Activated CD4-positive, alpha-beta memory T cell treated with anti-CD3 and anti-CD28 coated beads, Interleukin-2, amount 10 ng/mL, durations not matched to agents 7 days and 5 days (primary cell): ENCODE measurements at regions of chr5 and their contacts with region 1.

Region 1: DNA sequence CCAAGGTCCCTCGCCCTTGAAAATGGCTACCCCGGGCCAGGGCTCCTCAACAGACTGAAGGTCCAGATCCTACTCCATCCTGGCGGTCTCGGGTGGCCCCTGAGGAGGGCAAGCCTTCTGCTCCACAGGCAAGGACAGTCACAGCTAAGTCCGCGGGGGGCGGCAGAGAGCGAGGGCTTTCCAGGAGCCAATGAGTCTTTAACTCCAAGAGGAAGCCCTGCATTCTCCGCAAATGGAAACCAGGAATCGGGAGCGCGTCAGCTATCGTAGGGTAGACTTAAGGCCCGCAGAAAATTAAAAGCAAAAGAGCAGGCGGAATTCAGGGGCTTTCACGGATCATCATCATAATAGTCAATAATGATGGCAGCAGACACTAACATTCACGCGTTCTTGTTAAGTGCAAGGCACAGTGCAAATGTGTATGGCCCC is 87.8 kb upstream of the TNFAIP8 start:
- DNase-seq: peak; percentile 86
- H3K4me3 Mint-ChIP-seq: peak overlapping the region; percentile 96
- H3K27ac Mint-ChIP-seq: peak overlapping the region; percentile 89
- H3K4me1 Mint-ChIP-seq: peaks cover 50% of the 10 kb centered on the region
- H3K27me3 Mint-ChIP-seq: peaks cover 2% of the 10 kb centered on the region

Region 2: DNA sequence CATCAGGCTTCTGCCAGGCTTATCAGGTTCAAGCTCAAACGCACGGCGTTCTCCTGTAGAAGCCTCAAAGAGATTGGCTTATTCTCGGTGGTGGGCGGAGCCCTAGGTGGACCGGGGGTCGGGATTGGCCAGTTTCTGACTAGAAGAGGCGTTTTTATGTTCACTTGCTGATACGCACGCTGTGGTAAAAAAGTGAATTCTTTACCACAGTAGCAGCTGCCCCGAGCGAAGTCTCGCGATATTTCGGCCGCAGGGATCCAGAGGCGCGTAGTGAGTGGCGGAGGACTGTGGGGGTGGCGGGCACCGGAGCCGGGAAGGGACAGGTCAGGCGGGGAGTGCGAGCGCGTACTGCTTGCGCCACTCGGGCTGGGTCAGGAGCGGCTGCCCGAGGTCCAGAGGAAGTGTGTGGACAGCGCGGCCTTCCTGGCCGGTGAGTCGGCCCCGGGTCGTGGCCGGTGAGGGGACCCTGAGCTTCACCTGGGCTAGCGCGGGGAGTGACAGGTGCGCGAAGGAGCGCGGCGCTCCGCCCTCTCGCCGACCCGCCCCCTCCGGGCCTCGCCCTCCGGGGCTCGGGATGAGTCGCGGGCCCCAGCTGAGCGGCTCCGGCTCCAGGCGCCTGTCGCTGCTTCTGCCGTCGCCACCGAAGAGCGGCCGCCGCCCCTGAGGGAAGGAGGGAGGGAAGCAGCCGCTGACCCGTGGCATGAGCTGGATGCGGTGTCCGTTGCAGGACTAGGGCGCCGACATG is 197.0 kb before region 1 on chr5 and contains the start of gene DMXL1:
- CTCF ChIA-PET with region 1: interaction called, 8 read pairs
- POLR2A ChIA-PET with region 1: interaction called, 32 read pairs
- DNase-seq: peak; percentile 99
- H3K4me3 Mint-ChIP-seq: peak within 1 kb of the TSS; percentile 89
- H3K27ac Mint-ChIP-seq: peak within 1 kb of the TSS; percentile 96
- H3K4me1 Mint-ChIP-seq: peaks cover 41% of the 10 kb centered on the region
- H3K27me3 Mint-ChIP-seq: no peaks in the 10 kb centered on the region
- total RNA-seq, gene DMXL1: 31.5 to 33.0 TPM

Region 3: DNA sequence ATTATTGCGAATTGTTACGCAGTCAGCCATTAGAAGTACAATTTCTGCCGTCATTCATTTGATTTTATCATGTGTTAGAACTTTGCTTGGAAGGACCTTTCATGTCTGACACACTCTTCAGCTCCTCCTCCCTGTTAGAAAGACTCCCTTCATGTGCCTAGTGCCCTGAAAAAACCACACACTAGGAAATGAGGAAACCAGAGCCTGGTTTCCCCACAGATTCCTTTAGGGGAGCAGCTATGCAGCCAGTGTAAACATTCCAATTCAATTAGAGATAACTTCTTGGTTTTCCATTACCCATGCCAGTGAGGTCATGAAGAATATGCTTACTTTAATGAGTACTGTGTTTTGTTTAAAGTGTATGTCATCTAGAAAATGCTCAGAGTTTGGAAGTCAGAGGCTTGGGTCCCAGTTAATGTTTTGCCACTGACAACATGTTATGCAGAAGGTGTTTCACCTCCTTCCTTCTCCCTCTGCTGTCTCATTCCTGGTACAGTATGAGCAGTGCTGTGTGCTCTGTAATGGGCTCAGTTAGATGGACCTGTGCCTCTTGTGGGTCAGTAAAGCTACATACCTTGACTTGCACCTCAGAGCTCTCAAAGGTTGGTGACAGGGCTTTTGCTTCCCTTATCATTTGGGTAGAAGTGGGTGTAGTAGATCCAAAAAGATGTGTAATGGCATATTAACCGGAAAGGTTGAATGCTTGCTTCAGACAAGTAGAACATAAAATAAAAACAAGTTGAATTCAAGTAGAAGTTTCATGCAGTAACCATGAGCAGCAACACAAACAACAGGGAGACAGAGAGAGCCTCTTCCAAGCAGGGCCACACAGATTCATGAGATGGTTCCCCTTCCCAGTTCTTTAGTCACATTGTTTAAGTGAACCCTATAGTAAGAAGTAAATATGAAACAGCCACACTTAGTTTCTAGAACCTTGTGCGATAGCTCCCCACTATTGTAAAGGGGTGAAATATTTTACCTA is 35.2 kb after region 1 on chr5:
- CTCF ChIA-PET with region 1: interaction called, 12 read pairs
- POLR2A ChIA-PET with region 1: interaction called, 270 read pairs
- DNase-seq: no peak
- H3K4me3 Mint-ChIP-seq: no peak overlapping the region
- H3K27ac Mint-ChIP-seq: peak overlapping the region; percentile 32
- H3K4me1 Mint-ChIP-seq: peaks cover 90% of the 10 kb centered on the region
- H3K27me3 Mint-ChIP-seq: no peaks in the 10 kb centered on the region

Region 4: DNA sequence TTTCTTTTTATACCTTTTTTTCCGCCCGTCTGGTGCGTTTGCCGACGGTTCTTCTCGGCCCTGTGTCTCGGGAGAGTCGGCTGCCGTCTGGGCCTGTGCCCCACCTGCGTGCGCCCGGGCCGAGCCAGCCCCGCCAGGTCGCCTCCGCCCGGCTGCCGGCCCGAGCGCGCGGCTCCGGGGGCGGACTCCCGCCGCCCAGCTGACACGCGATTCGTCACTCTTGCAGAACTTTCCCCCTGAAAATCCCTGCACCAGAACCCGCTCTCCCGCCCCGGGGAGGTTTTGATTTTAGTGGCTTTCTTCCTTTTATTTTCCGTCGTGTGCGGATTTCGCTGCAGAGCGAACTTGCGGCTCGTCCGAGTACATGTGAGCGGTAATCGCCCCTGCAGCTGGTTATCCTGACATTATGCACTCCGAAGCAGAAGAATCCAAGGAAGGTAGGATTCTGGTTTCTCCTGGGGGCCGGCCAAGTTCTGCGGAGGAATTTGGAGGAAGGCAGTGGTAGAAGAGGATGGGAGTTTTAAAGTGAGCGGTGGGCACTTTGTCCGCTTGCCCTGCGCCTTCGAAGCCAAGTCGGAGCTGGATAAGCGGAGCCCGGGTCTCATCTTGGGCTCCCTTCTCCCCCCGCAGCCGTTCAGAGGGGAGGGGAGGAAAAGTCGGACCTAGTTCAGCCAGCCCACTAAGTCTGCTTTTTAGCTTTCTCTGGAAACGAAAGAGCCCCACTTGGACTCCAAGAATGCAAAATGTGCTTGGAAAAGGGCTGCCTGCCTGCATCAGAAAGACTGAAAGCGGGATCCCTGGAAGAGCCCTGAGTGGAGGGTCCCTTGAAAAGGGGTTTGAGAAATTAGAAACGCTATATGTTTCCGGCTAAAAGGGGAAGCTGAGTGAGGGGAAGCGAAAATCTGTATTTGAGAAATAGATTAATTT is 88.0 kb after region 1 on chr5 and contains the start of gene TNFAIP8:
- CTCF ChIA-PET with region 1: interaction called, 5 read pairs
- POLR2A ChIA-PET with region 1: interaction called, 76 read pairs
- DNase-seq: peak; percentile 65
- H3K4me3 Mint-ChIP-seq: peak within 1 kb of the TSS; percentile 94
- H3K27ac Mint-ChIP-seq: peak within 1 kb of the TSS; percentile 88
- H3K4me1 Mint-ChIP-seq: peaks cover 89% of the 10 kb centered on the region
- H3K27me3 Mint-ChIP-seq: no peaks in the 10 kb centered on the region
- total RNA-seq, gene TNFAIP8: 161 to 163 TPM

Region 5: DNA sequence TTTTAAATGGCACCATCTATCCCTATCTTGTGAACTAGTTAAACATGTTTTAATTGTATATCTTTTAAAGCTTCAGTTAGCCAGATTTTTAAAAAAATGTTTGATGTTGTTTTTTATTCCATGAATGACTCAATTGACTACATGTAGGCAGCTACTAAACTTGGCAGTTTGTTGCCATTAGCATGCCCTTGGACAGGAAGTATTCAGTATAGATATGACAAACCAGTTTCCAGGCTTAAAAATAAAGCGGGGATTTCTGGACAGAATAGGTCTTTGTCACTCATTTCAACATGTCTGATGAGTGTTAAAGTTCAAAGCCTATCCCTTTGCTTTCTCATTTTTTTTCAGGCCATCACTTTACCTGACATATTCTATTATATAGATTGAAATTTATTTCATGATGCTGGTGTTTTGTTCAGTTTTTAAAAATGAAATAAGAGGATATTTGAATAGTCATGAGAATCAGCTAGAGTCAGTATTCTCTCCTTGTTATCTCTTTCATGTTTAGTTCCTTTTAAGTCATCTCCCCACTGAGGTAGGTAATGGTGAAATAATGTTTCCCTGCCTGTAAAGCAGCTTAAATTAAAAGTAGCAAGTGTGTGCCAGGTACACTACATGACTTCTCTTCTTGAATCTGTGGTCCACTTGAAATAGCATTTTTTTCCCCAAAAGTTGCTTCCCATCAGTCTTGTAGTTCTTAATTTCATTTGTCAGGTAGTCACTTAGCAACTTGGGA is 99.7 kb after region 1 on chr5:
- CTCF ChIA-PET with region 1: interaction called, 5 read pairs
- POLR2A ChIA-PET with region 1: interaction called, 15 read pairs
- DNase-seq: no peak
- H3K4me3 Mint-ChIP-seq: peak overlapping the region; percentile 36
- H3K27ac Mint-ChIP-seq: peak overlapping the region; percentile 81
- H3K4me1 Mint-ChIP-seq: peaks cover 82% of the 10 kb centered on the region
- H3K27me3 Mint-ChIP-seq: no peaks in the 10 kb centered on the region